ENCODE measurements at regions of chrX and their contacts with region 1.

Region 1: GRCh38 chrX:150731795-150732194 is 38.6 kb downstream of the MTMR1 start:
- DNase-seq: no peak

Region 2: DNA sequence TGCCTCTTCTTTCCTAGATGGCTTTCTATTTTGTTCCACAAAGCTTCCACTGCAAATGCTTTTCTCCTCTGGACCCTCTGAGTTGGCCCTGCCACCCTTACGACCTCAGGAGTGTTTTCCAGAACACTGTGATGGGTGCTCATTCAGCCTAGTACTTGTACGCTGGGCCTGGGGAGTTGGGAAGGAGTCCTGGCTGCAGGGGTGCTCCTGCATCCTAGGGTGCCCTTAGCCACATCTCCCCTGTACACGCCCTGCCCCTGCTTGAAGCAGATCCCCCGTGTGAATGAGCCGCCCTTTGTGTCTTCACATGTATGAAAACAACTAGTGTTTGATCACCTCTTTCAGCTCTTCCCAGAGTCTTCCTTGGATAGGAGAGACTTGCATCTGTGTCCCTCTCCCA is 25.6 kb after region 1 on chrX:
- intact Hi-C with region 1: loop called in 1 of 2 experiments (anchors 1 kb)
- DNase-seq: no peak